A549 (cell line): ENCODE measurements at regions of chr11 and their contacts with region 1.

Region 1: GRCh38 chr11:119381181-119381988 is at the start of gene USP2:
- DNase-seq: peak; percentile 81 to 92
- ATAC-seq: peak; percentile 97 to 98
- H3K4me3 ChIP-seq: peak within 1 kb of the TSS; percentile 55
- H3K27ac ChIP-seq: peak within 1 kb of the TSS; percentile 43 to 69; a peak in 3 of 6 replicates
- H3K4me1 ChIP-seq: peaks cover 4% of the 10 kb centered on the region; the same call in 1 of the 3 replicates
- CTCF ChIP-seq: peak; percentile 70
- EP300 ChIP-seq: no peak
- POLR2A ChIP-seq: no peak
- RAD21 ChIP-seq: peak; percentile 36 to 61; a peak in 4 of 5 replicates
- polyA plus RNA-seq, gene USP2: 0.30 and 0.37 TPM in 2 replicates

Region 2: GRCh38 chr11:119258180-119258579 is 123.2 kb before region 1 on chr11:
- CTCF ChIA-PET with region 1: no interaction called
- POLR2A ChIA-PET with region 1: no interaction called
- DNase-seq: no peak
- ATAC-seq: no peak
- H3K4me3 ChIP-seq: no peak overlapping the region
- H3K27ac ChIP-seq: no peak overlapping the region
- H3K4me1 ChIP-seq: peaks cover 8% of the 10 kb centered on the region
- CTCF ChIP-seq: no peak
- EP300 ChIP-seq: no peak
- POLR2A ChIP-seq: no peak
- RAD21 ChIP-seq: no peak

Region 3: GRCh38 chr11:119334174-119334930 is 47.0 kb before region 1 on chr11 and contains the start of gene RNF26:
- CTCF ChIA-PET with region 1: interaction called, 123 read pairs
- POLR2A ChIA-PET with region 1: no interaction called
- DNase-seq: peak; percentile 96 to 97
- ATAC-seq: peak; percentile 81 to 89
- H3K4me3 ChIP-seq: peak within 1 kb of the TSS; percentile 72
- H3K27ac ChIP-seq: peak within 1 kb of the TSS; percentile 79 to 94
- H3K4me1 ChIP-seq: peaks cover 19% of the 10 kb centered on the region
- CTCF ChIP-seq: no peak
- EP300 ChIP-seq: no peak
- POLR2A ChIP-seq: peak; percentile 53
- RAD21 ChIP-seq: no peak
- polyA plus RNA-seq, gene RNF26: 23.5 and 28.4 TPM in 2 replicates

Region 4: GRCh38 chr11:119356349-119357031 is 24.9 kb before region 1 on chr11:
- CTCF ChIA-PET with region 1: interaction called, 341 read pairs
- POLR2A ChIA-PET with region 1: interaction called, 5 read pairs
- DNase-seq: peak; percentile 70 to 90
- ATAC-seq: peak; percentile 82 to 89
- H3K4me3 ChIP-seq: peak overlapping the region; percentile 57
- H3K27ac ChIP-seq: peak overlapping the region; percentile 78 to 87
- H3K4me1 ChIP-seq: peaks cover 30% of the 10 kb centered on the region
- CTCF ChIP-seq: peak; percentile 90
- EP300 ChIP-seq: no peak
- POLR2A ChIP-seq: no peak
- RAD21 ChIP-seq: peak; percentile 60 to 79

Region 5: GRCh38 chr11:119363851-119364590 is 17.4 kb before region 1 on chr11:
- CTCF ChIA-PET with region 1: interaction called, 341 read pairs
- POLR2A ChIA-PET with region 1: interaction called, 5 read pairs
- DNase-seq: peak in 1 of 2 experiments; percentile 31
- ATAC-seq: peak in 1 of 2 experiments; percentile 49; a peak in 3 of 6 replicates
- H3K4me3 ChIP-seq: peak overlapping the region; percentile 50
- H3K27ac ChIP-seq: peak overlapping the region; percentile 74 to 91
- H3K4me1 ChIP-seq: peaks cover 73% of the 10 kb centered on the region
- CTCF ChIP-seq: no peak
- EP300 ChIP-seq: no peak
- POLR2A ChIP-seq: no peak
- RAD21 ChIP-seq: no peak